ENCODE measurements at regions of chr15 and their contacts with region 1.

Region 1: GRCh38 chr15:84658080-84658787 is at the start of gene NMB:
- DNase-seq: no peak
- H3K4me3 ChIP-seq: peak within 1 kb of the TSS; percentile 60 to 62
- H3K27ac ChIP-seq: peak within 1 kb of the TSS; percentile 88
- H3K4me1 ChIP-seq: peaks cover 24% of the 10 kb centered on the region
- H3K27me3 ChIP-seq: no peaks in the 10 kb centered on the region
- CTCF ChIP-seq: peak; percentile 22 to 58 (median 35)
- POLR2A ChIP-seq: no peak
- total RNA-seq, gene NMB: 12.3 TPM

Region 2: GRCh38 chr15:84588053-84588874 is 70.0 kb before region 1 on chr15:
- intact Hi-C with region 1: no loop called
- DNase-seq: no peak
- H3K4me3 ChIP-seq: peak overlapping the region; percentile 37 to 38
- H3K27ac ChIP-seq: peak overlapping the region; percentile 36
- H3K4me1 ChIP-seq: peaks cover 10% of the 10 kb centered on the region
- H3K27me3 ChIP-seq: no peaks in the 10 kb centered on the region
- CTCF ChIP-seq: peak; percentile 17 to 97 (median 43)
- POLR2A ChIP-seq: no peak

Region 3: GRCh38 chr15:84690342-84690741 is 32.1 kb after region 1 on chr15:
- intact Hi-C with region 1: no loop called
- DNase-seq: no peak
- H3K4me3 ChIP-seq: no peak overlapping the region
- H3K27ac ChIP-seq: no peak overlapping the region
- H3K4me1 ChIP-seq: no peaks in the 10 kb centered on the region
- H3K27me3 ChIP-seq: no peaks in the 10 kb centered on the region
- CTCF ChIP-seq: no peak
- POLR2A ChIP-seq: no peak

Region 4: DNA sequence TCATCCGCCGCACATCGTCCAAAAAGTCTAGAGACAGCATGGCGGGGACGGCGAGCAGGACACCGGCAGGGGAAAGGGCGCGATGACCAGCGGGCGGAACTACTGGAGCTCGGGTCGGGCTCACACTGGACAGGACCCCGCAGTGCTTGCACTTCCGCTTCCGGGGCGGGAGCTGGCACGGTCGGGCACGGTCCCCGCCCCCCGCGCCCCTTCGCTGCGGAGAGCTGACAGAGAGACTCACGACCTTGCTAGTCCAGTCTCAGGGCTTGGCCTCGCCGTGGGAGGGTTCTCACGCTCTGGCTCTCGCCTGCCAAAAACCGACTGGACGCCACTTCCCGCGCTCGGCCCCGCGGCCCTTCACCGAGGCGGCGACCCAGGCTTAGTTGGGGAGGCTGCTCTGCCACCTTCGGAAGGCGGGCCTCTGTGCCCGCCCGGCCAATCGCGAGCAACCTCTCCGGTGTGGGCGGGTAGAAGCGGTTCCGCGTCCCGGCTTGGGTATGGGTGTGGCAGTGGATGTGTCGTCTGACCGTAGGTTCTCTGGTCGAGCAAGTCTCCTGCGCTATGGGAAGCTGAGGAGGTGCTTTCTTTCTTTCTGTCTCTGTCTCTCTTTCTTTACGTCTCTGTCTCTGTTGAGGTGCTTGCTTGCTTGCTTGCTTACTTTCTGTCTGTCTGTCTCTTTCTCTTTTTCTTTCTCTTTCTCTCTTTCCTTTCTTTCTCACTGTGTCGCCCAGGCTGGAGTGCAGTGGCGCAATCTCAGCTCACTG is 58.0 kb after region 1 on chr15 and contains the start of gene SEC11A:
- intact Hi-C with region 1: loop called (anchors 5 kb)
- DNase-seq: peak; percentile 96 to 97
- H3K4me3 ChIP-seq: peak within 1 kb of the TSS; percentile 76 to 91
- H3K27ac ChIP-seq: peak within 1 kb of the TSS; percentile 90
- H3K4me1 ChIP-seq: peaks cover 33% of the 10 kb centered on the region
- H3K27me3 ChIP-seq: no peaks in the 10 kb centered on the region
- CTCF ChIP-seq: no peak
- POLR2A ChIP-seq: peak in 1 of 2 donors; percentile 68
- total RNA-seq, gene SEC11A: 99.2 TPM

Region 5: DNA sequence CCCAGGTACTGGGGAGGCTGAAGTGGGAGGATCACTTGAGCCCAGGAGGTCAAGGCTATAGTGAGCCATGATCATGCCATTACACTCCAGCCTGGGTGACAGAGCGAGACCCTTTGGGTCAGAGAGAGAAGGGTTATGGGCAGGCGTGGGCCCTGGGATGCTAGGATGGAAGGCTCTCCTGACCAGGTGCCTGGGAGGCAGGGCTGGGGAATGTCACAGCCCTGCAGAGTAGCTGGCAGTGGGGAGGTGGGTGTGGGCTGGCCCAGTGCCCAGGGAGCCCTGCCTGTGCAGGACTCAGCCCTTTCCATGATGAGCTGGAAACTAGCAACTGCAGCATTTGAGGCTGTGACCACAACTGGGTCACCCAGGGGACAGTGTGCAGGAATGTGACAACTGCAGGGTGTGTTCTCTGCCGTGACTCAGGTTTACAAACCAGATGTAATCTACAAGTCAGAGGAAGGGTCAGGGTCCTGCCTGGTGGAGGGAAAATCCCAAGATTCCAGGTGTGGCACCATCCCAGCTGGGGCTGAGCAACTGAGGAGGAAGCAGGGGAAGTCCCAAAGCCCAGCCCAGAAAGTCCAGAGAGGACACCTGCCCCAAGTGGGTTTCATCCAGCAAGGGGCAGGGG is 271.6 kb after region 1 on chr15:
- intact Hi-C with region 1: loop called (anchors 10 kb)
- DNase-seq: no peak
- H3K4me3 ChIP-seq: no peak overlapping the region
- H3K27ac ChIP-seq: no peak overlapping the region
- H3K4me1 ChIP-seq: peaks cover 13% of the 10 kb centered on the region
- H3K27me3 ChIP-seq: no peaks in the 10 kb centered on the region
- CTCF ChIP-seq: no peak
- POLR2A ChIP-seq: no peak

Measured in vagina (tissue), 2 donors.